ENCODE measurements at regions of chr16 and their contacts with region 1.

Region 1: DNA sequence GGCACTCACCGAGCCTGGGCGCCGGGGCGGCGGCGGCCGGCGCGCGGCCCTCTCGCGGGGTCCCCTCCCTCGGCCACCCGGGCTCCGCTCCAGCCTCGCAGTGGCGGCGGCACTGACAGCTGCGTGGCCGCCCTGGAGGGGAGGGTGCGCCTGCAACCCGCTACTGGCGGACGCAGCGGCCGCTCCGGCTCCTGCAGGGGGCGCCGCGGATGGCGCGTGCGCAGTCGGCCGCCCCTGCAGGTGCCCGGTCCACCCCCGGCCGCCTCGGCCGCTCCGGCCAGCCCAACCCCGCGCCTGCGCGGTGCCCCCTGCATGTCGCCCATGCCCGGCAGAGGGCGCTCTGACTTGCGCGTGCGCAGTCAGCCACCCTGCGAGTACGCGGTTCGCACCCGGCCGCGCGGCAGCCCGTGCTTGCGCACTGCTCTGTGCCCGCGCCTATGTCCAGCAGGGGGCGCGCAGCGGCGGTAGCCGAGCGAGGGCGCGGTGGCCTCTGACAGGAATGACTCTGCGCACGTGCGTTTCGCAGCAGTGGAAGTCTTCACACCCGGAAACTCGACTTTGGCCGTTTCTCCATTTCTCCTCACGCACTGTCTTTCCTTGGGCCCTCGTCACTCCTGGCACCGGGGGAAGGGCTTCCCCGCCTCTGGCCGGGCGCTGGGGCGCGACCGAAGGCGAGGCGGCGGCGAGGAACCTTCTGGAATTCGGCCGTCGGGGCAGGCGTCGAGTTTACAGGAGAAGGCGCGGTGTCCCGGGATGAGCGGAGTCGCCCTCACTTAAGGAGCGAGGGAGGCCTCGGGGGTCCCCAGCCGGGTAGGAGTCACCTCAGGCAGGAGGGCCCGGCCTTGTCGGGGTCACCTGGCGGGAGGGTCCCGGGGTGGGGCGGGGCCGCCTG is at the start of gene ABCA3:
- DNase-seq: peak; percentile 85 to 94
- ATAC-seq: peak; percentile 91
- total RNA-seq, gene ABCA3: 3.8 to 3.9 TPM

Region 2: DNA sequence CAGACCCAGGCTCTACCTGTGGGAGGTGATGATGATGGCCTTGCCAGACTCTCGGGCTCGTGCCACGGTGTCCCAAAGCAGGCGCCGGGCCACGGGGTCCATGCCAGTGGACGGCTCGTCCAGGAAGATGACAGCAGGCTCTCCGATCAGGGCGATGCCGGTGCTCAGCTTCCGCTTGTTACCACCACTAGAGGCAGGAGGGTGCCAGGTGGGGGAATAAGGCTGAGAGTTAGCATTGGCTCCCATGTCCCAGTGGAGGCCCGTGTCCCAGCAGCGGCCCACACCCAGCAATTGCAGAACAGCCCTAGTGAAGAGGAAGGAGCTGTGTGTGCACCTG is 62.6 kb before region 1 on chr16:
- intact Hi-C with region 1: loop called in 1 of 2 experiments (anchors 10 kb)
- DNase-seq: no peak
- ATAC-seq: peak; percentile 66